ENCODE measurements at regions of chr19 and their contacts with region 1.

Region 1: DNA sequence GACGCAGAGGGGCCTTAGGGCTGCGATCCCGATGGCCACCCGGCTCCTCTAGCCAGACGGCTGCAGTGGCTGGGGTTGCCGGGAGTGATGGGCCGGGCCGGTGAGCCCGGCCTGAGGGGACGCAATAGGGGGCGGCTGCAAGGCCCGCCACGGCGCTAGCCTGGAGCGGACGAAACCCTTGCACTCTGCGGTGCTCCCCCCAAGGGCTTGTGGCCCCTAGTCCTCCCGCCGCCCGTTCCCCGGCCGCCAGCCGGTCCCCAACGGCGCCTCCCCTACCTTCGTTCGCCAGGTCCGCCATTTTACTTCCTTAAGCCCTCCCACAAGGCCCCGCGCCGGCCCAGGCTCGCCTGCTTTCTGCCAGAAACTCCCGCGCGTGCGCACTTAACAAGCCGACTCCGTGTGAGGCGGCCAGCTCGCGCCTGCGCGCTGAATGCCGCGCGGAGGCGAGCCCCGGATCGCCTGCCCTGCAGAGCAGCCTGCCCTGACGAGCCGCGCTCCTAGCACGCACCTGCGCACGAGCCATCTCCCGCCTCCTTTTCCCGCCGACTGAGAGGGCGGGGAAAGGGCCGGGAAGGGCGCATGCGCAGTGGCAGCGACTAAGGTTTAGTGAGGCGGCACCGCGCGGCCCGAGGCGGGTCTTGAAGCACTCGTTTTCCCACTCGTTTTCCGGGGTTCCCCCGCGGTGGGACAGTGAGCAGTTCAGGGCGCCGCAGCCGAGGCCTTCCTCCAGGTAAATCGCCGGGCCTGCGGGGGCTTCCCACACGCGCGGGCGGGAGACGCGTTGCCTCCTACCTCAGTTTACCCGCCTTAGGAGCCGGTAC is at the start of gene RANBP3:
- DNase-seq: peak; percentile 99
- ATAC-seq: peak; percentile 92
- H3K4me3 Mint-ChIP-seq: peak within 1 kb of the TSS; percentile 94
- H3K27ac Mint-ChIP-seq: peak within 1 kb of the TSS; percentile 90
- H3K4me1 Mint-ChIP-seq: peaks cover 56% of the 10 kb centered on the region
- H3K27me3 Mint-ChIP-seq: no peaks in the 10 kb centered on the region
- total RNA-seq, gene RANBP3: 85.5 to 103 TPM

Region 2: GRCh38 chr19:5680437-5681368 is 297.3 kb before region 1 on chr19 and contains the starts of genes HSD11B1L and MICOS13:
- CTCF ChIA-PET with region 1: no interaction called
- POLR2A ChIA-PET with region 1: no interaction called
- intact Hi-C with region 1: loop called in 1 of 2 experiments (anchors 5 kb)
- DNase-seq: peak; percentile 99
- ATAC-seq: peak; percentile 97
- H3K4me3 Mint-ChIP-seq: peak within 1 kb of the TSS; percentile 99
- H3K27ac Mint-ChIP-seq: peak within 1 kb of the TSS; percentile 94
- H3K4me1 Mint-ChIP-seq: peaks cover 20% of the 10 kb centered on the region
- H3K27me3 Mint-ChIP-seq: no peaks in the 10 kb centered on the region
- total RNA-seq, gene HSD11B1L: 2.0 to 3.2 TPM
- total RNA-seq, gene MICOS13: 50.9 to 52.1 TPM

Region 3: DNA sequence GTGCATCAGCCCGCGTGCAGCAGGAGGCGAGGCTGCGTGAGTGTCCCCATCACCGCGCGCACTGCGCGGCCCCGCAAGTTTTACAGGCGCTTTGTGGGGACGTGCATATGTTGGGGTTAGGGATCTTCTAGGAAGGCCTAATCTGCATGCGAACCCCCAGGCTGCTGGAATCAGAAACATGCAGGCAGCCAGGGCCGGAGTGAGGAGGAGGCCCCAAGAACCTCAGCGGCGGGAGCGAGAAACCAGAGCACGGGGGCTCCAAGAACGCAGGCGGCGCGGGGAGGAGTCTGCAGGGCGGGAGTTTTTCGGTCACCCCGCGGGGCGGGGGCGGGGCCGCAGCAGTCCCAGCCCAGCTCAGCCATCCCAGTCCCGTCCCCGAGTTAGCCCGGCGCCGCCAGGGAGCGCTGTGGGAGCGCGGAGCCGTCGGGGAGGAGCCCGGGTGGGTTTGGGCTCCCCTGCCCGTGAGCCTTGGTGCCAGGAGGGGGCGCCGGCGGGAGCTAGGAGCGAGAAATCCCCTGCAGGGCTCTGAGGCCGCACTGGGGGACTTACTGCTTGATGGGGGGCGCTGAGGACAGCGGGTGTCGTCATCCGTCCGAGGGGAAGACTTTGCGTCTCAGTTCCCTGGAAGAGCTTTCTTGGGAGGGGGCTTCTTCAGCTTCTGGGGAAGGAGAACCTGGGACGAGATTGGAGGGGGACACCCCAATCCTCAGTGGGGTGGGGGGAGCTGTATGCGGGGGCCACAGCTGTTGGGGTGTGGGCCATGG is 174.1 kb before region 1 on chr19:
- CTCF ChIA-PET with region 1: interaction called, 8 read pairs
- POLR2A ChIA-PET with region 1: no interaction called
- intact Hi-C with region 1: loop called in 1 of 2 experiments (anchors 1 kb)
- DNase-seq: peak; percentile 98
- ATAC-seq: peak; percentile 97
- H3K4me3 Mint-ChIP-seq: peak overlapping the region; percentile 63
- H3K27ac Mint-ChIP-seq: peak overlapping the region; percentile 47
- H3K4me1 Mint-ChIP-seq: peaks cover 21% of the 10 kb centered on the region
- H3K27me3 Mint-ChIP-seq: peaks cover 20% of the 10 kb centered on the region

Region 4: DNA sequence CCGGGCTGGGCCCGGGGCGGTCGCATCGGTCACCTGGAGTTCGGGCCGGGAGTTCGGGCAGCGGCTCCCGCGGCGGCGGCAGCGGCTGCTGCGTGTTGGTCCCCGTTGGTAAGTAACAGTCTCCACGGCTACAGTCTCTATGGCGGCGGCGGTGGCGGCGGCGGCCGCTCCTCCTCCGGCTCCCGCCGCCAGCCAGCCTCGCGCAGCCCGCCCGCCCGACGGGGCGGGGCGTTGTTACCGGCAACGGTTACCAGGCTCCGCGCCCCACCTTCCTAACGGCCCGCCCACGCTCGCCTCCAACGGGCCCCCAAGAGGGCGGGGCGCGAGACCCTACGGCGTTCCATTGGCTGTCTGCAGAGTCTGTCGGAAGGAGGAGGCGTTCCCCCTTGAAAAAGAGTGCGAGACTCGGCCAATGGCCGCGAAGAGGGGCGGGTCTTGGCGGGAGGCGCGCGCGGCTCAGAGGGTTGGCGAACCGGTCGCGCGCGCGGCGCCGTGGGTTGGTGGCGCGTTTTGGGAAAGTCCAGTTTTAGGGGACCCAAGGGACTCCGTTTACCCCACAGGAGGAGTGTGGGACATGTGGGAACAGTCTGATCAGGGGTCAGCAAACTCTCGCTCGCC is 132.5 kb after region 1 on chr19 and contains the start of gene RFX2:
- CTCF ChIA-PET with region 1: interaction called, 3 read pairs
- POLR2A ChIA-PET with region 1: no interaction called
- intact Hi-C with region 1: loop called in 1 of 2 experiments (anchors 1 kb)
- DNase-seq: peak; percentile 100
- ATAC-seq: peak; percentile 98
- H3K4me3 Mint-ChIP-seq: peak within 1 kb of the TSS; percentile 76
- H3K27ac Mint-ChIP-seq: peak within 1 kb of the TSS; percentile 60
- H3K4me1 Mint-ChIP-seq: peaks cover 23% of the 10 kb centered on the region
- H3K27me3 Mint-ChIP-seq: peaks cover 16% of the 10 kb centered on the region
- total RNA-seq, gene RFX2: 8.6 to 8.9 TPM

Region 5: DNA sequence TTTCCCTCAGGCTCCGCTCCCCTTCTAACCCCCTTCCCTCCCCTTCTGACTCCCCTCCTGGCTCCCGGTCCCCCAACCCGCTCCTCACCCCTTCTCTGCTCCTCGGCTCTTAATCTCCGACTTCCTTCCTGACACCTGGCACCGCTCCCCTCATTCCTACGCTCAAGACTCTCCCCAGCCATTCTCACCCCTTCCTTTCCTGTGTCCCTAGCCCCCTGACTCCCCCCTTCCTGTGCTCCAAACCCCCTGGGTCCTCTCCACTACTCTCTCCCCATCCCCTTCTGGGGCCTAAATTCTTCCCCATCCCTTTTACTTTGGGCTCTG is 384.0 kb after region 1 on chr19:
- CTCF ChIA-PET with region 1: no interaction called
- POLR2A ChIA-PET with region 1: no interaction called
- intact Hi-C with region 1: loop called in 1 of 2 experiments (anchors 1 kb)
- DNase-seq: no peak
- ATAC-seq: peak; percentile 1
- H3K4me3 Mint-ChIP-seq: peak overlapping the region; percentile 85
- H3K27ac Mint-ChIP-seq: peak overlapping the region; percentile 91
- H3K4me1 Mint-ChIP-seq: peaks cover 16% of the 10 kb centered on the region
- H3K27me3 Mint-ChIP-seq: no peaks in the 10 kb centered on the region